ENCODE measurements at regions of chr13 and their contacts with region 1.

Region 1: DNA sequence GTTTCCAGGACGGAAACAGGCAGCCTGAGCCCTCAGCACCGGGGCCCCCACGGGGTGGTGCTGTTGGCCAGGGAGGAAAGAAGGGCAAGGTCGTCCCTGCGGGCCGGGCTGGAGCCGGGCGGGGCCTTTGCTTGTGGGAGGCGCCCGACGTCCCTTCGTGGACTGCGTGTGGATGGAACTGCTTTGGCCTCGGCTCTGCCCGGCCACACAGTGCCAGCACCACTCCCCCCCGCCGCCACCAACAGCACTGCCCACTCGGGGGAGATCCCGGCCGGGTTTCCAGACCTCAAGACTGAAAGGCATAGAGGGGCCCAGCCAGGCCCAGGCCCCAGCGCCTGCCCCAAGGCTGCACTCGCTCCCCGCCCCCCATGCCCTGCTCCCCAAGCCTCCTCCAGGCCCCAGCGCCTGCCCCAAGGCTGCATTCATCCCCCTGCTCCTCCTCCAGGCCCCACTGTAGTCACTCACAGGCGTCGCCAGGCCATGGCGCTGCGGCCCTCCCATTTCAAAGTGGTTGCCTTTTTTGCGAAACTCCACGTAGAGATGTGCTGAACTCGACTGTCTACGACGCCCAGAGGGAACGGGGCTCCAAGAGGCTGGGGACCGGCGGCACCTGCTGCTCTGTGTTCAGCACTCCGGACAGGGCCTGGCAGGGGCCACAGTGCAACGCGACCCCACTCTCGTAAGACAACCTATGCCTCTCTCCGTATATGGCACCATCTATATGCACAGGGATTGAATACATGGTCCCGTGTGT is 22.5 kb downstream of the C13orf46 start:
- DNase-seq: peak; percentile 83
- H3K4me3 Mint-ChIP-seq: no peak overlapping the region
- H3K27ac Mint-ChIP-seq: no peak overlapping the region
- H3K4me1 Mint-ChIP-seq: peaks cover 4% of the 10 kb centered on the region
- H3K27me3 Mint-ChIP-seq: no peaks in the 10 kb centered on the region
- CTCF ChIP-seq: peak; percentile 96

Region 2: DNA sequence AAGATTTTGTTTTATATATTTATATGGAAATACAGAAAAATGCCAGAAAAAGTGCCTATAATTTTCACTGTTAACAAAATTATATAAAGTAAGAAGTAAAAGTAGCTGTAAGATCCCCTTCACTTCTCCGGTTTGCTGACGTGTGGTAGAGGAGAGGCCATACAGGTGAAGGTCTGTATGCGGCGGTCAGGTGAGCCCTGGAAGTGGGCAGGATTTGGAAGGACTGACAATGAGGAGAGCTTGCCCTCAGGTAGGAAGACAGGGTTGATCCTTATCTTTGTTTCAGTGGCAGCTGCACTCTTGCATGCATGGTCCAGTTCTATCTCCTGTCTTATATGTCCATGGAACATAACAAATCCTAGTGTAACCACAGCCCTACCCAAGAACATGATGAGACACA is 383.7 kb before region 1 on chr13:
- CTCF ChIA-PET with region 1: interaction called, 3 read pairs
- POLR2A ChIA-PET with region 1: no interaction called
- intact Hi-C with region 1: loop called (anchors 1 kb)
- DNase-seq: no peak
- H3K4me3 Mint-ChIP-seq: no peak overlapping the region
- H3K27ac Mint-ChIP-seq: no peak overlapping the region
- H3K4me1 Mint-ChIP-seq: peaks cover 5% of the 10 kb centered on the region
- H3K27me3 Mint-ChIP-seq: peaks cover 15% of the 10 kb centered on the region
- CTCF ChIP-seq: no peak

Region 3: GRCh38 chr13:113802761-113803160 is 148.7 kb before region 1 on chr13:
- CTCF ChIA-PET with region 1: no interaction called
- POLR2A ChIA-PET with region 1: no interaction called
- intact Hi-C with region 1: no loop called
- DNase-seq: no peak
- H3K4me3 Mint-ChIP-seq: no peak overlapping the region
- H3K27ac Mint-ChIP-seq: no peak overlapping the region
- H3K4me1 Mint-ChIP-seq: no peaks in the 10 kb centered on the region
- H3K27me3 Mint-ChIP-seq: no peaks in the 10 kb centered on the region
- CTCF ChIP-seq: no peak

Region 4: GRCh38 chr13:114119196-114119595 is 167.8 kb after region 1 on chr13:
- CTCF ChIA-PET with region 1: no interaction called
- POLR2A ChIA-PET with region 1: no interaction called
- intact Hi-C with region 1: no loop called
- DNase-seq: peak; percentile 49
- H3K4me3 Mint-ChIP-seq: peak overlapping the region; percentile 42
- H3K27ac Mint-ChIP-seq: peak overlapping the region; percentile 74
- H3K4me1 Mint-ChIP-seq: peaks cover 9% of the 10 kb centered on the region
- H3K27me3 Mint-ChIP-seq: no peaks in the 10 kb centered on the region
- CTCF ChIP-seq: no peak

Region 5: GRCh38 chr13:114151565-114152284 is 200.3 kb after region 1 on chr13:
- CTCF ChIA-PET with region 1: interaction called, 3 read pairs
- POLR2A ChIA-PET with region 1: no interaction called
- intact Hi-C with region 1: loop called (anchors 10 kb)
- DNase-seq: peak; percentile 93
- H3K4me3 Mint-ChIP-seq: no peak overlapping the region
- H3K27ac Mint-ChIP-seq: peak overlapping the region; percentile 57
- H3K4me1 Mint-ChIP-seq: peaks cover 10% of the 10 kb centered on the region
- H3K27me3 Mint-ChIP-seq: peaks cover 4% of the 10 kb centered on the region
- CTCF ChIP-seq: peak; percentile 17

Region 6: GRCh38 chr13:114226699-114227323 is 275.4 kb after region 1 on chr13:
- CTCF ChIA-PET with region 1: interaction called, 11 read pairs
- POLR2A ChIA-PET with region 1: interaction called, 4 read pairs
- intact Hi-C with region 1: loop called (anchors 1 kb)
- DNase-seq: peak; percentile 84
- H3K4me3 Mint-ChIP-seq: no peak overlapping the region
- H3K27ac Mint-ChIP-seq: no peak overlapping the region
- H3K4me1 Mint-ChIP-seq: peaks cover 6% of the 10 kb centered on the region
- H3K27me3 Mint-ChIP-seq: no peaks in the 10 kb centered on the region
- CTCF ChIP-seq: peak; percentile 96